Posterior vena cava (tissue), 2 donors: ENCODE measurements at regions of chr1 and their contacts with region 1.

Region 1: DNA sequence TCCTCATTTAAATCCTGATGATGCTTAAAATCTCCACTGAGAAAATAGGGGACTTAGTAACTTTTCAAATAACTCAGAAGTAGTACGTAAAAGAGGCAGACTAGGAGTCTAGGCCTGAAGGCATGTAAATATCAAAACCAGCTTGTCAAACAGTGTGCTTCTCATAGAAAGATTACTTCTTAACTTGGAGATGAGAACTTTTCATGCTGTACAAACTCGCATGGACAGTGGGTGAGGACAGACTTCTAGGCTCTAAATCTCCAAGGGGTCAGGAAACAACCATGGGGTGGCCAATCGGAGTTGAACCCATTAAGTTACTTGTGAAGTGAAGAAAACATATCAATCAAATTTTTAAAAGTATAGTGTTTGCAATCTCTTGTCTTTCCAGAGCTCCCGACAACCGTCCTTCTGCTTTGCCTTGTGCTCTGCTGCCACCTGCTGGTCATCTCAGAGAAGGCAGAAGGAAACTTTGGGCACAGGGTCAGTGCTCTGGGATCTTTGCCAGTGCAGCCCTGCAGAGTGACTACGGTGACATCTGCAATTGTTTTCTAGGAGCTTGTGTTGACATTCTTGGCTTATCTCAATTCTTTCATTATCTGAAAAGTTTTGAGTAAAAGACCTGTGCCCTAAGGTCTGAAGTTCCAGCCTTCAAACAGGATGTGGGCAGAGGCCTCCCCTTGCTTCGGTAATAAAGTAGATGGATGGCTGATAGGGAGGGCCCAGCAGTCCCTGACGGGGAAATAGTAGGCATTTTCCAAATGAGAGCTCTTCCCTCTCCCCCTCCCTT is 105.1 kb upstream of the PDE4B start:
- DNase-seq: peak; percentile 93

Region 2: DNA sequence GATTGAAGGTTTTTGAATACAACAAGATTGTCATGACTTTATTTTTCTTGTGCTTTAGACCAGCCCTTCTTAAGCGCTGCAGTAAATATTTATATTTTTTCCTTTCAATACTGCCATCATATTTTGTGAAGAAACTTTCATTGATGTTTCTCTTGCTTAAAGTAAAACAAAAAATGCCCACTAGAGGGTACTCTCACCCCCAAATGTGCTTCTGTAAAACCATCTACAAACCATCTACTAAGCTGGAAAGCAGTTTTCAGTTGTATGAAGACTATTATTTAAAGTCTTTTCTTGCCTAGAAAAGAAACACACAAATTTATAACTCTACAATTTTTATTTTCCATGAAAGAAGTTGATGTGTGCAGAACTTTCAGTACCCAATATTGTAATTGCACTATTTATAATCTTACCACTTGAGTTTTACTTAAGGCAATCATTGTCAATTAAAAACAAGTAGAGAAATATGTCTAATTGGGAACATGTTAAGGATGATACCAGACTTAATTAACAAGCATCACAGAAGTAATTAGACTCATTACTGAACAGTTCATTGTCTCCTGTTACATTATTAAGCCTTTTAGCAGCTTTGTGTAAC is 256.4 kb before region 1 on chr1:
- intact Hi-C with region 1: loop called (anchors 5 to 10 kb)
- DNase-seq: no peak

Region 3: GRCh38 chr1:65630855-65631254 is 56.8 kb before region 1 on chr1:
- intact Hi-C with region 1: no loop called
- DNase-seq: no peak